Stomach (tissue), 19 donors: ENCODE measurements at regions of chr9 and their contacts with region 1.

Region 1: GRCh38 chr9:134171316-134172197 is 7.2 kb upstream of the RNU6ATAC start:
- DNase-seq: peak in 1 of 2 donors; percentile 37
- H3K4me3 ChIP-seq: no peak overlapping the region
- H3K27ac ChIP-seq: peak overlapping the region in 4 of 5 donors; percentile 7 to 71 (median 48)
- H3K4me1 ChIP-seq: peaks cover 6 to 28% (median 21%) of the 10 kb centered on the region in 4 donors
- H3K27me3 ChIP-seq: peaks cover 0 to 35% (median 13%) of the 10 kb centered on the region in 3 donors
- CTCF ChIP-seq: no peak
- EP300 ChIP-seq: no peak
- POLR2A ChIP-seq: no peak

Region 2: DNA sequence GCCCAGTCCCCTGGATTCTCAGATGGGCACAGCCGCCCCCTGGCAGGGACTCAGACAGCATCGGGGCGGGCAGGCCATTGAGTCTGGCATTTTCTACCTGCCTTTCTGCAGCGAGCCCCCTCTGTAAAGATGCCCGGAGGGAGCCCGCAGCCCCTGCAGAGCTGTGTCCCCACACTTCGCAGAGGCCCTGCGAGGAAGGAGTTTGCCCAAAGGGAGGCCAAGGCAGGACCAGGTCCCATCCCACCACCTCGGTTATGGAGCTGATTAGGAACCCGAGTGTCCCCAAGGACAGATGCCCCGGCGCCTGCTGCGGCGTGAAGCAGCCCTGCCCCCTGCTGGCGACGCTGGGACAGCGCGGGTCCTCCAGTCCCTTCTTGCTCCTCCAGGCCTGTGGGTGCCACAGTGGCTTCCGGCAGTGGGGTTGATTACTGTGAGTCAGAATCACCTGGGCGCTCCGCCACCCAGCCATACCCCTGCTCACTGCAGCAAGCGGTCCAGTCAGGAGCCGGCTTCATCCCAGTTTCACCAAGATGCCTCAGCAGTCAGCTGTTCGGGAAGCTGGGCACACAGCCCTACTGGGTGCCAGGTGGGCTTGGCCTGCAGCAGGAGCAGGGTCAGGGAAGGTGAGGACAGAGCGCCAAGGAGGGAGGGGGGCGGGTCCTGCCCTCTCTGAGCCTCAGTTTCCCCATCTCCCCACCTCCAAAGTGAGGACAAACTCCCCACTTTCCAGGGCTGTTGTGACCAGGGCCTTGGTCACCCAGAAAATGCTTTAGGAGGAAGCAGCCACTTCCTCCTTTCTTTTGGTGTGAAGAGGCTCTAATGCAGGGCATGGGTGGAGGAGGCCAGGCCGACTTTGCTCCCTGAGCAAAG is 271.8 kb after region 1 on chr9:
- intact Hi-C with region 1: loop called (anchors 2 kb)
- DNase-seq: peak; percentile 93 to 95
- H3K4me3 ChIP-seq: no peak overlapping the region
- H3K27ac ChIP-seq: peak overlapping the region in 3 of 5 donors; percentile 34 to 72 (median 51)
- H3K4me1 ChIP-seq: peaks cover 24 to 38% (median 31%) of the 10 kb centered on the region in 4 donors
- H3K27me3 ChIP-seq: peaks cover 0 to 20% (median 10%) of the 10 kb centered on the region in 3 donors
- CTCF ChIP-seq: peak in 6 of 7 experiments; percentile 92 to 99 (median 98)
- EP300 ChIP-seq: no peak
- POLR2A ChIP-seq: no peak